ENCODE measurements at regions of chr11 and their contacts with region 1.

Region 1: DNA sequence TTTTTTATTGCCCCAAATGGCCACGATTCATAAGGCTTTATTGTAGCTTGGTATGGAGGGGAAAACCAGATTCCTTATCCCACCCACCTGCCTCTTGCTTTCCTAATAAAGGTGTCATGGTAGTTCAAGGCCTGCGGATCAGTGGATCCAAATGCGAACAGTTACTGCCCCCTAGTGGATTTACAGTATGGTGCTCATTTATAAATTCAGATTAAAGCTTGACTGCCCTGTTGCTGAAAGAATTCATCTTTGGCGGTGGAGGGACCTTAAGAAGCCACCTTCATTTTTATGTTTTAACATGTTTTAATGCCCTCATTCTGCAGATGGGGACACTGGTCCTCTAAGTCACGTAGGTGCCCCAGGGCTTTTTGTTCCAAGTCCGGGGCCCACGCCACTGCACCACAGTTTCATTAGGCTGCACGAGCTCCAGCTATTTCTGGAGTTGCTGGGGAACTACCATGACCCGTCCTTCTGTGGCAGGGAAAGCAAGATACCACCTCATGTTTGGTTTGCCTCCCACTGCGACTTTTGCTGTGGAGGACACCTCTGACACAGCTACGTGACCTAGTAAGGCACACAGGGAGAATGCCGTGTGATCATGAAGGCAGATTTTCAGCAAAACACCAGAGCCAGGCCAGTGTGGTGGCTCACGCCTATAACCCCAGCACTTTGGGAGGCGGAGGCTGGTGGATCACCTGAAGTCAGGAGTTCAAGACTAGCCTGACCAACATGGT is 15.6 kb upstream of the INCENP start:
- DNase-seq: peak in 7 of 9 donors; percentile 56 to 76 (median 69)
- ATAC-seq: peak; percentile 78
- H3K4me3 ChIP-seq: no peak overlapping the region
- H3K4me3 Mint-ChIP-seq: peak overlapping the region in 1 of 10 donors; percentile 38
- H3K27ac ChIP-seq: no peak overlapping the region
- H3K27ac Mint-ChIP-seq: peak overlapping the region in 3 of 9 donors; percentile 48 to 81 (median 80)
- H3K4me1 ChIP-seq: peaks cover 6 to 7% of the 10 kb centered on the region in 2 donors
- H3K4me1 Mint-ChIP-seq: peaks cover 6 to 27% (median 16%) of the 10 kb centered on the region in 7 donors
- H3K27me3 ChIP-seq: no peaks in the 10 kb centered on the region
- H3K27me3 Mint-ChIP-seq: peaks cover 0 to 15% (median 4%) of the 10 kb centered on the region in 5 donors

Region 2: GRCh38 chr11:60906132-60906972 is 1201.8 kb before region 1 on chr11 and contains the start of gene PRPF19:
- CTCF ChIA-PET with region 1: no interaction called
- POLR2A ChIA-PET with region 1: interaction called, 10 read pairs
- intact Hi-C with region 1: no loop called
- DNase-seq: peak; percentile 98 to 100 (median 99)
- ATAC-seq: peak; percentile 96
- H3K4me3 ChIP-seq: peak within 1 kb of the TSS; percentile 89
- H3K4me3 Mint-ChIP-seq: peak within 1 kb of the TSS; percentile 84 to 95 (median 91)
- H3K27ac ChIP-seq: peak within 1 kb of the TSS; percentile 88
- H3K27ac Mint-ChIP-seq: peak within 1 kb of the TSS; percentile 95 to 100 (median 98)
- H3K4me1 ChIP-seq: peaks cover 22 to 26% of the 10 kb centered on the region in 2 donors
- H3K4me1 Mint-ChIP-seq: peaks cover 34 to 69% (median 58%) of the 10 kb centered on the region in 7 donors
- H3K27me3 ChIP-seq: no peaks in the 10 kb centered on the region
- H3K27me3 Mint-ChIP-seq: peaks cover 0 to 11% (median 0%) of the 10 kb centered on the region in 5 donors
- total RNA-seq, gene PRPF19: 72.8 to 139 (median 85.6) TPM

Region 3: DNA sequence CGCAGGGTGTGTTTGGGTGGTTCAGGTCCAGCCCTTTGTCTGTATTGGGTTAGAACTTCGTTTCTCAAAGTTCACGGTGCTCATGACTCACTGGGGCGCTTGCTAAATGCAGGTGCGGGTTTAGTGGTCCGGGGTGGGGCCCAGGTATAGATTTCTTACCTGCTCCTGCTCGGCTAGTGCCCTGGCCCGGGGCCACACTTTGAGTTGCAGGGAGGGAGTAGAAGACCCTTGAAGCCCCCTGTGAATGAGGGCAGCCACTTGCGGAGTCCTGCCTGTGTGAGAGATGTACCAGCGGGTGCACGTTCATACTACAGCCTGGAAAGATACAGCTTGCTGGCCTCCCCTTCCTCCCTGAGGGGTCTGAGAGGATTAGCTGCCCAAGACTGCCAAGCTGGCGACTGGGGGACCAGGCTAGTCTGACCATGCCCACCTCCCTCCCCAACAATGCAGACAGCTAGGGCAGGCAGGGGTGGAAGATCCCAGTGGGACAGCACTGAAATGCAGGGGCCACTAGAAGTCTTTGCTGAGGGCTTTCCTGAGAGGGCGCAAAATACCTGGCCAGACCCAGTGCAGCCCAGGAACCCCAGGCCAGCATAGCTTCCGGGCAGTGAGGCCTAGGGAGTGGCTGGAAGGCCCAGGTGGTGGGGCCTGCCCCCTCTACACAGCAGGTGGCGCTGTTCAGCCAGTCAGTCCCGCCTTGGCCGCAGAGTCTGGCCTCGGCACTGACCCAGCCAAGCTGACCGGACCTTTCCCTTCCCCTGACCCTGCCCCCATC is 360.8 kb before region 1 on chr11:
- CTCF ChIA-PET with region 1: interaction called, 3 read pairs
- POLR2A ChIA-PET with region 1: no interaction called
- intact Hi-C with region 1: loop called (anchors 1 to 5 kb)
- DNase-seq: peak in 5 of 9 donors; percentile 13 to 67 (median 18)
- ATAC-seq: peak; percentile 65
- H3K4me3 ChIP-seq: no peak overlapping the region
- H3K4me3 Mint-ChIP-seq: no peak overlapping the region
- H3K27ac ChIP-seq: no peak overlapping the region
- H3K27ac Mint-ChIP-seq: no peak overlapping the region
- H3K4me1 ChIP-seq: no peaks in the 10 kb centered on the region
- H3K4me1 Mint-ChIP-seq: peaks cover 0 to 10% (median 6%) of the 10 kb centered on the region in 7 donors
- H3K27me3 ChIP-seq: peaks cover 0 to 3% of the 10 kb centered on the region in 2 donors
- H3K27me3 Mint-ChIP-seq: peaks cover 17 to 22% (median 20%) of the 10 kb centered on the region in 5 donors

Region 4: DNA sequence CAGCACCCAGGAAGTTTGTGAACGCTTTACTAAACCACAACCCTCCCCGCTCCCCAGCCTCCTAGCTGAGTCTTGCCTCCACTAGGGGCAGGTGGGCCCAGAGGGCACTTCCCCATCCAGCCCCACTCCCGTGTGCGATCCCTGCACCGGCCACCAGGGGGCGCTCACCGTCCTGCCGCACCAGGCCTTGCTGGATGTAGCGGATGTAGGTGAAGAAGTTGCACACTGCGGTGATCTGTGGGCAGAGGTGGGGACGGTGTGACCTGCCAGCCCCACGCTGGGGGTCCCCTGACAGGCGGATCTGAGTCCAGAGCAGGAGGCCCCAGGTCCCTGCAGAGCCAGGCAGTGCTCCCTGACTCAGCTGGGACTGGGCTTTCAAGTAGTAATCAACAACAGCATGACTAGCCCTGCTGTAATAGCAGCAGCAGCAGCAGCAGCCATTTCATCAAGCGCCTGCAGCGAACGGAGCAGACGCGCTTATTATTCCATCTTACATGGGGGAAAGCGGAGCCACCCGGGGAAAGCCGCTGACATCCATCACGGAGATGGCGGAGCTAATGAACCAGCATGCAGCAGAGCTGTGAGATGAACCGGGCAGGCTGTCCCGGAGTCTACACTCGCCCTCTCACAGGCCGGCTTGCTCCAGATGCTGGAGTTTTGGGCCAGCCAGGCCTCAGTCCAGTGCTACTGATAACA is 208.9 kb before region 1 on chr11:
- CTCF ChIA-PET with region 1: interaction called, 71 read pairs
- POLR2A ChIA-PET with region 1: no interaction called
- intact Hi-C with region 1: loop called (anchors 1 kb)
- DNase-seq: peak; percentile 88 to 98 (median 93)
- ATAC-seq: peak; percentile 98
- H3K4me3 ChIP-seq: no peak overlapping the region
- H3K4me3 Mint-ChIP-seq: no peak overlapping the region
- H3K27ac ChIP-seq: no peak overlapping the region
- H3K27ac Mint-ChIP-seq: peak overlapping the region; percentile 55 to 93 (median 69)
- H3K4me1 ChIP-seq: peaks cover 4% of the 10 kb centered on the region in 2 donors
- H3K4me1 Mint-ChIP-seq: peaks cover 4 to 7% (median 5%) of the 10 kb centered on the region in 7 donors
- H3K27me3 ChIP-seq: no peaks in the 10 kb centered on the region
- H3K27me3 Mint-ChIP-seq: peaks cover 0 to 4% (median 0%) of the 10 kb centered on the region in 5 donors

Region 5: DNA sequence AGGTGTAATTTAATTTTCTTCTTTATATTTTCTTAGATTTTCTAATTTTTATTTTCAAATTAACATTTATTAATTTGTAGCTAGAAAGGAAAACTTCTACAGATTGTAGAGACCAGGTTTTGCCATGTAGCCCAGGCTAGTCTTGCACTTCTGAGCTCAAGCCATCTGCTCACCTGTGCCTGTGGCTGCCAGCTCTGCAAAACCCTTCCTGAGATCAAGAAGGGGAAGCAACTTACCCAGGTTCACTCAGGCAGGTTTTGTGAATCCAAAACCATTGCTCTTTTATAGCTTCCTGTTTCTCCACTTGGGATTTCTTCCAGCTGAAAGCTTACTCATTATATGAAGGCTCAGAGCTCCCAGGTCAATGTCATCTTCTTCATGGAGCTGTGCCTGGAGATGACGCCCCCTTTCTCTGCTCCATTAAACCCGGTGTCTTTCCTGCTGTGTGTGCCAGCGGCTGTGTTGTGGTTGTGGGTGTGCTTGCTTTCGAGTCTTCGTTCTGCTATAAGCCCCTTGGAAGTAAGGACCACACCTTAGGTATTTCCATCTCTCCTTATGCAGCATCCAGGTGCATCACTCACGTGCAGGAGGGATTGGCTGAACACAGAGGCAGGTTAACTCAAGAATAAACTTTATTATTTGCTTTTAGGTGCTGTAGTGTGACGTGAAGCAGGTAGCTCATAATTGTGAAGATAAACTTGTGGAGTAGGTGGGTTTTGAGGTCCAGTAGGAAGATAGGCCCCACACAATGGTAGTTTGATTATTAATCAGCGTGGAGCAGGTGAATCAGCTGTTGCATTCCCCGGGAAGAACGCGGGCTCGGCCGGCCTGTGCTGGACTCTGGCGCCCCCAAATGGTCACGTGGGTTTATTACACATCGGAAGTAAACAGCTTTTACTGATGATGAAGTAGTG is 26.5 kb before region 1 on chr11:
- CTCF ChIA-PET with region 1: interaction called, 29 read pairs
- POLR2A ChIA-PET with region 1: interaction called, 7 read pairs
- intact Hi-C with region 1: loop called (anchors 2 kb)
- DNase-seq: peak; percentile 62 to 85 (median 77)
- ATAC-seq: peak; percentile 96
- H3K4me3 ChIP-seq: no peak overlapping the region
- H3K4me3 Mint-ChIP-seq: peak overlapping the region in 9 of 10 donors; percentile 40 to 70 (median 55)
- H3K27ac ChIP-seq: no peak overlapping the region
- H3K27ac Mint-ChIP-seq: peak overlapping the region in 6 of 9 donors; percentile 10 to 91 (median 76)
- H3K4me1 ChIP-seq: peaks cover 0 to 7% of the 10 kb centered on the region in 2 donors
- H3K4me1 Mint-ChIP-seq: peaks cover 0 to 13% (median 6%) of the 10 kb centered on the region in 7 donors
- H3K27me3 ChIP-seq: no peaks in the 10 kb centered on the region
- H3K27me3 Mint-ChIP-seq: peaks cover 0 to 9% (median 0%) of the 10 kb centered on the region in 5 donors